B cell (primary cell): ENCODE measurements at regions of chr13 and their contacts with region 1.

Region 1: GRCh38 chr13:99269627-99270241 is 11.6 kb upstream of the GPR18 start:
- DNase-seq: peak; percentile 81
- ATAC-seq: peak; percentile 76
- H3K4me3 ChIP-seq: no peak overlapping the region
- H3K4me3 Mint-ChIP-seq: no peak overlapping the region
- H3K27ac ChIP-seq: peak overlapping the region; percentile 69 to 89
- H3K27ac Mint-ChIP-seq: peak overlapping the region; percentile 50
- H3K4me1 ChIP-seq: peaks cover 45 to 55% of the 10 kb centered on the region in 2 donors
- H3K4me1 Mint-ChIP-seq: peaks cover 59% of the 10 kb centered on the region
- H3K27me3 ChIP-seq: no peaks in the 10 kb centered on the region
- H3K27me3 Mint-ChIP-seq: no peaks in the 10 kb centered on the region
- CTCF ChIP-seq: peak; percentile 92

Region 2: DNA sequence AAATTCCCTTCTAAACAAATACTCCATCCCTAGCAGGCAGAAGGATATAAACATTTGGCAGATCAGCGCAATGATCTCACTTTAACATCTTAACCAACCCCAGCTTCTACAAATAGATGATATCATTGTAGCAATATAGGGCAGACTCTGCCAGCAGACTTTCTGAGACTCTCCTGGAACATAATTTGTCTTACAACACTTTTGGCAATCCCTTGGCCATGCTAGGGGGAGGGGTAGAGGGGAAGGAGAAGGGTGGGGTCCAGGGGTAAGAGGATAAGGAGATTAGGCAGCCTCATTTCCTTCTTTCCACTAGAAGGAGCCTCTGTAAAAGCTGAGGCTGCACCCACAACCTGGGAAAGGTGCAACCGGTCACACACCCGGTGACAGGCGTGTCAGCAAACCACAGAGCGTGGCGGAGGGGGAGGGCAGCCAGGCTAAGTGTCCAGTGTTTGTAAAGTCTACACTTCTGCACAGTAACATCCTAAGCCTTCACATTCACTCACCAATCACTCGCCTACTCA is 77.8 kb before region 1 on chr13:
- CTCF ChIA-PET with region 1: interaction called, 661 read pairs
- POLR2A ChIA-PET with region 1: interaction called, 11 read pairs
- intact Hi-C with region 1: loop called (anchors 1 kb)
- DNase-seq: no peak
- ATAC-seq: no peak
- H3K4me3 ChIP-seq: no peak overlapping the region
- H3K4me3 Mint-ChIP-seq: no peak overlapping the region
- H3K27ac ChIP-seq: no peak overlapping the region
- H3K27ac Mint-ChIP-seq: no peak overlapping the region
- H3K4me1 ChIP-seq: peaks cover 4 to 14% of the 10 kb centered on the region in 2 donors
- H3K4me1 Mint-ChIP-seq: peaks cover 21% of the 10 kb centered on the region
- H3K27me3 ChIP-seq: no peaks in the 10 kb centered on the region
- H3K27me3 Mint-ChIP-seq: no peaks in the 10 kb centered on the region
- CTCF ChIP-seq: no peak

Region 3: GRCh38 chr13:99258210-99258860 is 11.4 kb before region 1 on chr13 and contains the start of gene GPR18:
- CTCF ChIA-PET with region 1: interaction called, 109 read pairs
- POLR2A ChIA-PET with region 1: no interaction called
- intact Hi-C with region 1: no loop called
- DNase-seq: peak; percentile 75
- ATAC-seq: peak; percentile 66
- H3K4me3 ChIP-seq: peak within 1 kb of the TSS; percentile 60 to 98 (median 79)
- H3K4me3 Mint-ChIP-seq: peak within 1 kb of the TSS; percentile 98
- H3K27ac ChIP-seq: peak within 1 kb of the TSS; percentile 86 to 90
- H3K27ac Mint-ChIP-seq: peak within 1 kb of the TSS; percentile 96
- H3K4me1 ChIP-seq: peaks cover 57 to 68% of the 10 kb centered on the region in 2 donors
- H3K4me1 Mint-ChIP-seq: peaks cover 81% of the 10 kb centered on the region
- H3K27me3 ChIP-seq: no peaks in the 10 kb centered on the region
- H3K27me3 Mint-ChIP-seq: no peaks in the 10 kb centered on the region
- CTCF ChIP-seq: no peak
- total RNA-seq, gene GPR18: 17.6 and 19.1 TPM in 2 replicates

Region 4: DNA sequence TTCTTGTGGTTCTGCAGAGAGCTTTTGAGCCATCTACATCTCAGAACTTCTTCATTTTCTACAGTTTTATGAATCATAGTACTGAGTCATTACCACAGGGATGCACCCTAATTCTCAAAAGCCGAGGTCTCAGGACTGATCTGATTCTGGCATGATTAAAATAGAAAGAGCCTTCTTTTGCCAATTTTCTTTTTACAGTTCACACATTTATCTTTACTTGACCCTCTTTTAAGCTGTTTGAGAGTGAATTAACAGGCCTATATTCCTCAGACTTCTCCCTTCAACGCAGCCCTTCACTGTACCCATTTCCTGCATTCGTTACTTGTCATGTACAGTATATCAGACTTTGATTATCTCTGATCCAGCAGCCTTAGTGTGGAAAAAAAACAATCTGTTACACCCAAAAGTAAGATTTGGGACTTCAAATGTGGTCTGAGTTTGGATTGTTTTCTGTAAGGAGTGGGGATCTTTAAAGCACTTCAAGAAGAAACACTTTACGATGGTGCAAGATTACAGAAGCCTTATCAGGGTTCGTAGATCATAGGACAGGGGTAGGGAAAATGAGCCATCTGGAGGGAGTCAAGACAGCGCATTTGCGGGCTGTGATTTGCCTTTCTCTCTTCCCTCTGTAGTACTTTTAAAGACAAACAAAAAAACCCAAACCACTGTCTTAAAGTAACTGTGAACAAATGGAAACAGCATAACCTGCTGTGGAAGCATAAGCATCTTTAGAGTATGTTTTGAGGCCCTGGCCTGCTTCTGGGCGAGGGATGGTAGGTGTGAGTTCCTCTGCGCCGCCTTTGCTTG is 52.8 kb after region 1 on chr13:
- CTCF ChIA-PET with region 1: interaction called, 28 read pairs
- POLR2A ChIA-PET with region 1: no interaction called
- intact Hi-C with region 1: no loop called
- DNase-seq: peak; percentile 46
- ATAC-seq: peak; percentile 78
- H3K4me3 ChIP-seq: no peak overlapping the region
- H3K4me3 Mint-ChIP-seq: peak overlapping the region; percentile 77
- H3K27ac ChIP-seq: peak overlapping the region; percentile 56 to 73
- H3K27ac Mint-ChIP-seq: peak overlapping the region; percentile 91
- H3K4me1 ChIP-seq: peaks cover 43 to 49% of the 10 kb centered on the region in 2 donors
- H3K4me1 Mint-ChIP-seq: peaks cover 58% of the 10 kb centered on the region
- H3K27me3 ChIP-seq: no peaks in the 10 kb centered on the region
- H3K27me3 Mint-ChIP-seq: no peaks in the 10 kb centered on the region
- CTCF ChIP-seq: no peak

Region 5: DNA sequence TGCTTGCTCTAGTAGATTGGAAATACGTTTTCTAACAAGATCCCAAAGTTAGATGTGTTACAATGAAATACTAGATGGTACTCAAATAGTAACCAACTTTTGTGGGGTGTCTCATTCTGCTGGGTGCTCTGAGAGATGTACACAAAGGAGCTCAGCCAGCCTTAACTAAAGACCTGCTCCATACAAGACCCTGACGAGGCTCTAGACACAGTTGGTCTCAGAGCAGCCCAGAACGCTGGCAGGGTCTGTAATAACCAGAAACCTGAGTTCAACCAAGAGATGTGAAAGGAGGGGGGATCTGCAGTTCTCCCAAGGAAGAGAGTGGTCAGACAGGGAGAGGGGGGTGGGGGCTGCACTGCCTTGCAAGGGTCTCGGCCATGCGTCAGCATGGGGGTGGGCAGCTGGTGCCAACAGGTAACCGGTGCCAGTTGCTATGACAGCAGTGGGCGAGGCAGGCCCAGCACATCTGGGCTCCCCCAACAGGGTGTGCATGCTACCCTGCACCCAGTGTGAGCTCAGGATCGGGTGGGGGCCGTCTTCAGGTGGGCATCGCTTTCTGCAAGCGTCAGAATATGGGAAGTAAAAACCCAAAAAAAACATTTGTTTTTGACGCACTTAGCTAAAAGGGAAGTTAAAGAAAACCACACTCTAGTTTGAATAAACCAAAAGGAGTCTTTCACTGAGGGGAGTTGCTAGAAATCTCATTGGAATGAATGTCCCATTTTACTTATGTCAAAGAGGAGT is 105.4 kb after region 1 on chr13:
- CTCF ChIA-PET with region 1: interaction called, 477 read pairs
- POLR2A ChIA-PET with region 1: interaction called, 9 read pairs
- intact Hi-C with region 1: loop called (anchors 1 kb)
- DNase-seq: peak; percentile 96
- ATAC-seq: peak; percentile 78
- H3K4me3 ChIP-seq: peak overlapping the region in 4 of 5 experiments; percentile 9 to 42 (median 34)
- H3K4me3 Mint-ChIP-seq: peak overlapping the region; percentile 77
- H3K27ac ChIP-seq: peak overlapping the region; percentile 99 to 100
- H3K27ac Mint-ChIP-seq: peak overlapping the region; percentile 98
- H3K4me1 ChIP-seq: peaks cover 77 to 90% of the 10 kb centered on the region in 2 donors
- H3K4me1 Mint-ChIP-seq: peaks cover 86% of the 10 kb centered on the region
- H3K27me3 ChIP-seq: no peaks in the 10 kb centered on the region
- H3K27me3 Mint-ChIP-seq: no peaks in the 10 kb centered on the region
- CTCF ChIP-seq: no peak

Region 6: DNA sequence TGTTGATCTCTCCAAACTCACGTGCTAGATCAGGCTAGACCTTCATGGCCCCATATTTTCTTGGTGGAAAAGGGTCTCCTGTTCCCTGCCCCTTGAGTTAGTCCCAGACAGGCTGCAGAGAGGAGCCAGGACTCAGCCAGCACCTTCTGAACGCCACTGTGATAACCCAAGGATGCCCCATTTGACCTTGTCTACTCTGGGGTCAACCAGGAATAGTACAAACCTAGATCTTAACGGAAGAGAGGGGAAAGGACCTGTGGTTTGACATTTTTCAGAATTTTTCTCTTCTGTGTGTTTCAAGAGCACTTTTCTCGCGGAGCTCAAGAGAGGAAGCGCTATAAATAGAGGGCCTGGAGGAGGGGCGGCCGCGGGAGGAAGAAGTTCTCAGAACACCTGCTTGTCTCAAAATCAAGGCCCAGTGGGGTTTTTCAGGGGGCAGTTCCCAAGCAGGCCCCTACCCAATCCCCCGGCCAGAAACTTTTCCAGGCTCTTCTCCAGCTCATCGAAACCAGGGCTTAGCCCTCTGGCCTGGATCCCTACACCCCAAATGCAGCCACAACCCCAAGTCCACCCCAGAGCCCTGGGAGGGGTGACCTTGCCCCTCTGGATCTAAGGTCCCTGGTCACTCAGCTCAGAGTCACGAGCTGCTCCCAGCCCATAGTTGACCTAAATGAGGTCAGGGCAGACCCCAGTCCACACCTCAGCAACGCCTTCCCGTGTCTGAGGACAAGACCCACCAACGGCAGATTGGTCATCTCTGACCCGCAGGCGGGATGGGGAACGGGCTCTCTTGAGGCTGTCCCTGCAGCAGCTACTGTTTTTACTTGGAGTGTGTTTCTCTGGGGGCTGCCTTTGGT is 156.0 kb after region 1 on chr13:
- CTCF ChIA-PET with region 1: interaction called, 53 read pairs
- POLR2A ChIA-PET with region 1: no interaction called
- intact Hi-C with region 1: no loop called
- DNase-seq: peak; percentile 80
- ATAC-seq: peak; percentile 59
- H3K4me3 ChIP-seq: peak overlapping the region in 3 of 5 experiments; percentile 21 to 58 (median 41)
- H3K4me3 Mint-ChIP-seq: peak overlapping the region; percentile 72
- H3K27ac ChIP-seq: peak overlapping the region; percentile 92 to 96
- H3K27ac Mint-ChIP-seq: peak overlapping the region; percentile 93
- H3K4me1 ChIP-seq: peaks cover 65 to 79% of the 10 kb centered on the region in 2 donors
- H3K4me1 Mint-ChIP-seq: peaks cover 71% of the 10 kb centered on the region
- H3K27me3 ChIP-seq: no peaks in the 10 kb centered on the region
- H3K27me3 Mint-ChIP-seq: no peaks in the 10 kb centered on the region
- CTCF ChIP-seq: no peak

Region 7: GRCh38 chr13:99805361-99805760 is 535.6 kb after region 1 on chr13:
- CTCF ChIA-PET with region 1: no interaction called
- POLR2A ChIA-PET with region 1: no interaction called
- intact Hi-C with region 1: no loop called
- DNase-seq: no peak
- ATAC-seq: no peak
- H3K4me3 ChIP-seq: no peak overlapping the region
- H3K4me3 Mint-ChIP-seq: no peak overlapping the region
- H3K27ac ChIP-seq: no peak overlapping the region
- H3K27ac Mint-ChIP-seq: no peak overlapping the region
- H3K4me1 ChIP-seq: no peaks in the 10 kb centered on the region
- H3K4me1 Mint-ChIP-seq: no peaks in the 10 kb centered on the region
- H3K27me3 ChIP-seq: no peaks in the 10 kb centered on the region
- H3K27me3 Mint-ChIP-seq: no peaks in the 10 kb centered on the region
- CTCF ChIP-seq: no peak

Region 8: GRCh38 chr13:100514788-100515409 is 1245.2 kb after region 1 on chr13:
- CTCF ChIA-PET with region 1: interaction called, 14 read pairs
- POLR2A ChIA-PET with region 1: no interaction called
- intact Hi-C with region 1: loop called (anchors 10 kb)
- DNase-seq: peak; percentile 74
- ATAC-seq: peak; percentile 84
- H3K4me3 ChIP-seq: no peak overlapping the region
- H3K4me3 Mint-ChIP-seq: no peak overlapping the region
- H3K27ac ChIP-seq: no peak overlapping the region
- H3K27ac Mint-ChIP-seq: no peak overlapping the region
- H3K4me1 ChIP-seq: no peaks in the 10 kb centered on the region
- H3K4me1 Mint-ChIP-seq: peaks cover 3% of the 10 kb centered on the region
- H3K27me3 ChIP-seq: no peaks in the 10 kb centered on the region
- H3K27me3 Mint-ChIP-seq: no peaks in the 10 kb centered on the region
- CTCF ChIP-seq: peak; percentile 95